Activated naive CD4-positive, alpha-beta T cell treated with anti-CD3 and anti-CD28 coated beads for 36 hours (primary cell): ENCODE measurements at regions of chr12 and their contacts with region 1.

Region 1: GRCh38 chr12:95942524-95943329 is at the start of gene CCDC38:
- DNase-seq: peak; percentile 91
- H3K4me3 Mint-ChIP-seq: peak within 1 kb of the TSS; percentile 86
- H3K27ac Mint-ChIP-seq: peak within 1 kb of the TSS; percentile 80
- H3K4me1 Mint-ChIP-seq: peaks cover 4% of the 10 kb centered on the region
- H3K27me3 Mint-ChIP-seq: no peaks in the 10 kb centered on the region
- total RNA-seq, gene CCDC38: 0.49 TPM in 1 of 2 experiments, not detected in the other

Region 2: DNA sequence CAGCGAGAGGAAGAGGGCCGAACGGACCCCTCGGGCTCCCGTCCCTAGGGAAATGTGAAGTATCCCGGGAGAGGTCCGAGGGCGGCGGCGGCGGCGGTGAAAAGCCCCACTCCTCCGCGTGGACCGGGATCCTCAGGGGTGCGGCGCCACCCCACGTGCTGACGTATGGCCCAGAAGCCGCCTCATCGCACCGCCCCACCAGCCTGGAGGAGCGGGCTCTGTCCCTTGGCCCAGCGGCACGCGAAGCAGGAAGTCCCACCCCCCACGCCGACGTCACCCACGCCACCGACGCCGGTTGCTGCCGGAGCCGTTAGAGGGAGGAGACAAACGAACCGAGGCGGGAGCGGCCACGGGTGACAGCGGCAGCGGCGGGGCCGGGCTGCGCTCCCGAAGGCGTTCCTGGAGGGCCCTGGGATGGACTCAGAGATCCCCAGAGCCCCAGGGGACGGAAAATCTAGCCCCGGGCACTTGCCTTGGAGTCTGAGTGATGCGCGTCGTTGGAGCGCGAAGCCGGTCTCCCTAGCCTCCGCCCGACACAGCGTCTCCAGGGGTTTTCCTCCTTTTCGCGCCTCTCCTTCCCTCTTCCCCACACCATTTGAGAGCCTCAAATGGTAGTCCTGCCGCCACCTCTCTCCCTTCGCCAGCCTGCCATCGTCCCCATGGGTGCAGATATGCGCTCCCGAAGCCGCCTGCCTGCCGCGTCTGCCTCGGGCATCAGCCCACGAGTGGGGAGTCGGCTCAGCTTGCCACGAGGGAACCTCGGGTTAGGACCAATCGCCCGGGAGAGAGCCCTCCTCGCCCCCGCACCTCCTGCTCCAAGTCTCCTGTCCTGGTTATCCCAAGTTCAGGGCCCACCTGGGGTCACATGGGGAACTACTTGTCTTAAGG is 1482.8 kb before region 1 on chr12 and contains the start of gene CEP83:
- CTCF ChIA-PET with region 1: no interaction called
- intact Hi-C with region 1: loop called (anchors 5 kb)
- DNase-seq: peak; percentile 98
- H3K4me3 Mint-ChIP-seq: peak within 1 kb of the TSS; percentile 97
- H3K27ac Mint-ChIP-seq: peak within 1 kb of the TSS; percentile 91
- H3K4me1 Mint-ChIP-seq: peaks cover 29% of the 10 kb centered on the region
- H3K27me3 Mint-ChIP-seq: peaks cover 5% of the 10 kb centered on the region
- total RNA-seq, gene CEP83: 19.0 to 21.5 TPM

Region 3: GRCh38 chr12:95548539-95549391 is 394.0 kb before region 1 on chr12:
- CTCF ChIA-PET with region 1: no interaction called
- intact Hi-C with region 1: loop called (anchors 5 kb)
- DNase-seq: peak; percentile 75
- H3K4me3 Mint-ChIP-seq: peak overlapping the region; percentile 89
- H3K27ac Mint-ChIP-seq: peak overlapping the region; percentile 80
- H3K4me1 Mint-ChIP-seq: peaks cover 41% of the 10 kb centered on the region
- H3K27me3 Mint-ChIP-seq: no peaks in the 10 kb centered on the region

Region 4: DNA sequence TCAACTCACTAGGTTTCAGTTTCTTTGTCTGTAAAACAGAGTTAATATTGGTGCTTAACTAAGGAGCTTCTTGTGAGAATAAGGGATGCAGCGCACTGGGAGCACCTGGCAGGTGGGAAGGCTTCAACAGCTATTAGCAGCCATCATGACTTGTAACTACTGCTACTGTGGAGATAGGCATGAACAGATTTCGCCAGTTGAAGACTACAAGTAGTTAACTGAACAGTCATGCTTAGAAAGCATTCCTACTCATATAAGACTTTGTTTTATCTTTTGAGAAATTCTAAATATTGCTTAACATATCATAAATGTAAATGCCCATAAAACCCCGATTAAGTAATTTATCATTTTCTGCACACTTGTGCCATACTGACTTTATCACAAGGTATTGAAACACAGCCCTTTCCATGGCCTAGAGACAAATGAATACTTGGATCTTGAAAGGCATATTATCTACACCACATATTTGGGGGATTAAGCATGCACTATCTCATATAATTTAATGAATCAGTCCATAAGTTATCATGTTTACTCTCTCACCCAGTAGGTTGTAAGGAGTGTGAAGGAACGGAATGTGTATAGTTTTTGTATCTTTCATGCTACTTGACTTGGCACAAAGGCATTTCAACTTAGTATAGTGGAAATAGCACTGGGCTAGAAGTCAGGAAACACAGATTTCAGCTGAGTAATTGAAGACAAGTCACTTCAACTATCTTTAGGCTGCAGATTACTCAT is 168.2 kb before region 1 on chr12:
- CTCF ChIA-PET with region 1: no interaction called
- intact Hi-C with region 1: no loop called
- DNase-seq: no peak
- H3K4me3 Mint-ChIP-seq: no peak overlapping the region
- H3K27ac Mint-ChIP-seq: no peak overlapping the region
- H3K4me1 Mint-ChIP-seq: no peaks in the 10 kb centered on the region
- H3K27me3 Mint-ChIP-seq: peaks cover 22% of the 10 kb centered on the region

Region 5: GRCh38 chr12:95858479-95859343 is 84.0 kb before region 1 on chr12 and contains the start of gene SNRPF:
- CTCF ChIA-PET with region 1: no interaction called
- intact Hi-C with region 1: loop called (anchors 1 kb)
- DNase-seq: peak; percentile 97
- H3K4me3 Mint-ChIP-seq: no peak within 1 kb of the TSS
- H3K27ac Mint-ChIP-seq: no peak within 1 kb of the TSS
- H3K4me1 Mint-ChIP-seq: peaks cover 25% of the 10 kb centered on the region
- H3K27me3 Mint-ChIP-seq: peaks cover 3% of the 10 kb centered on the region
- total RNA-seq, gene SNRPF: 57.4 to 59.9 TPM

Region 6: GRCh38 chr12:95918194-95918993 is 24.3 kb before region 1 on chr12:
- CTCF ChIA-PET with region 1: interaction called, 7 read pairs
- intact Hi-C with region 1: loop called (anchors 2 kb)
- DNase-seq: peak; percentile 65
- H3K4me3 Mint-ChIP-seq: no peak overlapping the region
- H3K27ac Mint-ChIP-seq: no peak overlapping the region
- H3K4me1 Mint-ChIP-seq: no peaks in the 10 kb centered on the region
- H3K27me3 Mint-ChIP-seq: peaks cover 2% of the 10 kb centered on the region

Region 7: DNA sequence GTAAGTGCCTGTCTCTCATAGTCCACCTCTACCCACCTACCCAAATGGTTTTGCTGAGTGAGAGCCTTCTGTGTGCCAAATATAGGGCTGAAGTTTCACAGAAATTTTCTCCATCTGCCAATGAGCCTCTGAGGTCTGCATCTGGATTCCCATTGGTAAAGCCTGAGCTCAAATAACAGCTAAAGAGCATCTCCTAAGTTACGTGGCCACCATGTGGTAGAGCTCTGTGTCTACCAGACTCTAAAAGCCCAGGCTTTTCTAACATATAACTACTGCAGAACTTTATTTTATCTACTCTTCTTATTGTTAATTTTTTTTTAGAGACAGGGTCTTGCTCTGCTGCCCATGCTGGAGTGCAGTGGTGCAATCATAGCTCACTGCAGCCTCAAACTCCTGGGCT is 16.4 kb after region 1 on chr12:
- CTCF ChIA-PET with region 1: interaction called, 11 read pairs
- intact Hi-C with region 1: no loop called
- DNase-seq: no peak
- H3K4me3 Mint-ChIP-seq: no peak overlapping the region
- H3K27ac Mint-ChIP-seq: no peak overlapping the region
- H3K4me1 Mint-ChIP-seq: no peaks in the 10 kb centered on the region
- H3K27me3 Mint-ChIP-seq: no peaks in the 10 kb centered on the region

Region 8: GRCh38 chr12:96237465-96238077 is 294.8 kb after region 1 on chr12:
- CTCF ChIA-PET with region 1: no interaction called
- intact Hi-C with region 1: loop called (anchors 1 kb)
- DNase-seq: peak; percentile 75
- H3K4me3 Mint-ChIP-seq: no peak overlapping the region
- H3K27ac Mint-ChIP-seq: peak overlapping the region; percentile 47
- H3K4me1 Mint-ChIP-seq: peaks cover 66% of the 10 kb centered on the region
- H3K27me3 Mint-ChIP-seq: no peaks in the 10 kb centered on the region